Gastrocnemius medialis (tissue), 4 donors: ENCODE measurements at regions of chr6 and their contacts with region 1.

Region 1: DNA sequence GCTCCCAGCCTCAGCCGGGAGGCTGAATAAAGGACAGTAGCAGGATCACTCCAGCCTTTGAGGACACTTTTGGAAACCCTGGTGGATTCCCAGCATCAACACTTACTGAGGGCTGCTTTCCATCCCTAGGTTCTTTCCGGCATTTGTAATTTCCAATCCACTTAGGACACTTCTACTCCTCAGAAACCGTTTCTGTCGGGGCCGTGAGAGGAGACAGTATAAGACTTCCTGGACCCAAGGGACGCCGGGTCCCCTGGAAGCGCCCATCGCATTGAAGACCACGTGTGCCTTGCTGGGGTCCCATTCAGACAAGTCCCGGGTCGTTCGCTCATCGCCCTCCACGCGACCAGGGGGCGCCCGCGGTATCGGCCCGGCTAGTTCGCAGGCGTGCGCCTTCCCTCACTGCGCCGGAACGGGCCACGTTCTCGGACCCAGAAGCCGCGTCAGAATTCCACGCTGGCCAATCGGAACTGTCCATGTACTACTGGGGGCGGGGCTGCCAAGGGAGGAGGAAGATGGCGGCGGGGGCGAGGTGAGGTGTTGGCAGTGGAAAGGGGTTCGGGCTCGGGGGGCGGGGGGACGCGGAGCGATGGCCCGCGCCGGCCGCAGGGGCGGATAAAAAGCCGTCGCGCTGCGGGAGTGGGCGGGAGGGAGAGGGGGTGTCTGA is at the start of gene NUS1:
- DNase-seq: peak; percentile 90 to 96
- ATAC-seq: peak; percentile 97 to 98
- H3K4me3 ChIP-seq: peak within 1 kb of the TSS; percentile 65 to 93 (median 76)
- H3K27ac ChIP-seq: peak within 1 kb of the TSS; percentile 84 to 90 (median 89)
- H3K4me1 ChIP-seq: peaks cover 26 to 28% of the 10 kb centered on the region in 2 donors
- H3K27me3 ChIP-seq: no peaks in the 10 kb centered on the region
- CTCF ChIP-seq: peak; percentile 31 to 80 (median 66)
- POLR2A ChIP-seq: peak; percentile 51 to 53
- total RNA-seq, gene NUS1: 7.1 to 10.5 (median 7.6) TPM

Region 2: DNA sequence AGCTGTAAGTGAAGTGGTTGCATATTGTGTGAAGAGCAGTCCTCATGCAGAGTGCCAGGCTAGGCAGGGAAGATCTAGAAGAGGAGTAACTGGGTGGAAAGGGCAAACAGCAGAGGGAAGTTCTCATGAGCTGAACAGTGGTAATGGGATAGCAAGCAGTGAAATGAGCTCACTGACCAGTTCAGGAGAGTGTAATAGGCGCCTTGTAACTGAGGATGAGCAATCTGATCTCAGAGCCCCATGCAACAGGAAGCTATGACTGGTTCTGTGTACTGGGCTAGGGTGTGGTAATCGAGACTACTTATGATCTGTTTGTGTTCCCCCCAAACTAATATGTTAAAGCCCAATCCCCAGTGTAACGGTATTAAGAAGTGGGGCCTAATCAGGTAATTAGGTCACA is 699.5 kb before region 1 on chr6:
- in situ Hi-C with region 1: no loop called
- intact Hi-C with region 1: loop called (anchors 2 kb)
- DNase-seq: peak; percentile 65 to 68
- ATAC-seq: peak; percentile 86 to 94
- H3K4me3 ChIP-seq: no peak overlapping the region
- H3K27ac ChIP-seq: peak overlapping the region; percentile 78 to 91 (median 88)
- H3K4me1 ChIP-seq: peaks cover 27 to 30% of the 10 kb centered on the region in 2 donors
- H3K27me3 ChIP-seq: no peaks in the 10 kb centered on the region
- CTCF ChIP-seq: no peak
- POLR2A ChIP-seq: peak; percentile 39 to 66

Region 3: GRCh38 chr6:117637770-117638169 is 37.4 kb before region 1 on chr6:
- in situ Hi-C with region 1: no loop called
- intact Hi-C with region 1: no loop called
- DNase-seq: no peak
- ATAC-seq: no peak
- H3K4me3 ChIP-seq: no peak overlapping the region
- H3K27ac ChIP-seq: no peak overlapping the region
- H3K4me1 ChIP-seq: no peaks in the 10 kb centered on the region
- H3K27me3 ChIP-seq: no peaks in the 10 kb centered on the region
- CTCF ChIP-seq: no peak
- POLR2A ChIP-seq: no peak

Region 4: DNA sequence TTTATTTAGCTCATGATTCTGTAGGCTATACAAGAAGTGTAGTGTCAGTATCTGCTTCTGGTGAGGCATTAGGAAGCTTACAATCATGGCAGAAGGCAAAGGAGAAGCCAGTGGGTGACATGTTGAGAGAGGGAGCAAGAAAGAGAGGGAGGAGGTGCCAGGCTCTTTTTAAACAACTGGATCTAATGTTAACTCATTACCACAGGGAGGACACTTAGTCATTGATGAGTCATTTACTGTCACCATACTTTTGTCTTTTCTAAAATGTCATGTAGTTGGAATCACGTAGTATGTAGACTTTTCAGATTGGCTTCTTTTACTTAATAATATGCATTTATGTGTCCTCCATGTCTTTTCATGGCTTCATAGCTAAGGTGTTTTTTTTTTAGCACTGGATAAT is 58.2 kb after region 1 on chr6:
- in situ Hi-C with region 1: no loop called
- intact Hi-C with region 1: no loop called
- DNase-seq: no peak
- ATAC-seq: no peak
- H3K4me3 ChIP-seq: no peak overlapping the region
- H3K27ac ChIP-seq: no peak overlapping the region
- H3K4me1 ChIP-seq: no peaks in the 10 kb centered on the region
- H3K27me3 ChIP-seq: no peaks in the 10 kb centered on the region
- CTCF ChIP-seq: no peak
- POLR2A ChIP-seq: no peak

Region 5: DNA sequence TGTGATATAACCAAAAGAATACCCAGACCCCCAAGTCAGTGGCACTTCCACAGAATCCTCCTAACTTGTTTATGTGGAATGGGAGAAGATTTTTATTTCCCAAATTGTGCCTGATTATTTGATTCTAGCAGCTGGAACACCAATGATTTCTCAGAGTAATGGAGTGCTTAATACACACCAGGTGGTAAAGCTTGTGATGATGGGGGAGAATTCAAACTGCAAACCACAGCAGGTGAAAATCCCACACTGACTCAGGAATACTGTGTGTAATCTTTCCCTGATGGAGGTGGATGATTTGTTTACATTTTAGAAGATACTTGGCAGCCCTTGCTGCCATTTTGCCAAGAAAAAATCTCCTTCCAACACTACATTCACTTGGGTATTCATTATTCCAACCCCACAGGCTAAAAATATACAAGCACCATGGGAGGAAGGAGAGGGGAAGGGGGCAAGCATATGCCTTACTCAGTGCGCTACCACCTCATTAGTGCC is 660.2 kb after region 1 on chr6:
- in situ Hi-C with region 1: no loop called
- intact Hi-C with region 1: no loop called
- DNase-seq: no peak
- ATAC-seq: no peak
- H3K4me3 ChIP-seq: no peak overlapping the region
- H3K27ac ChIP-seq: peak overlapping the region; percentile 80 to 90 (median 88)
- H3K4me1 ChIP-seq: peaks cover 28 to 29% of the 10 kb centered on the region in 2 donors
- H3K27me3 ChIP-seq: no peaks in the 10 kb centered on the region
- CTCF ChIP-seq: no peak
- POLR2A ChIP-seq: no peak

Region 6: GRCh38 chr6:118709859-118710350 is 1034.8 kb after region 1 on chr6:
- in situ Hi-C with region 1: no loop called
- intact Hi-C with region 1: loop called (anchors 5 kb)
- DNase-seq: no peak
- ATAC-seq: peak; percentile 27 to 40
- H3K4me3 ChIP-seq: peak overlapping the region in 3 of 4 donors; percentile 11 to 59 (median 45)
- H3K27ac ChIP-seq: peak overlapping the region; percentile 74 to 85 (median 75)
- H3K4me1 ChIP-seq: peaks cover 33 to 37% of the 10 kb centered on the region in 2 donors
- H3K27me3 ChIP-seq: no peaks in the 10 kb centered on the region
- CTCF ChIP-seq: no peak
- POLR2A ChIP-seq: no peak